CD8-positive, alpha-beta T cell (primary cell): ENCODE measurements at regions of chr2 and their contacts with region 1.

Region 1: DNA sequence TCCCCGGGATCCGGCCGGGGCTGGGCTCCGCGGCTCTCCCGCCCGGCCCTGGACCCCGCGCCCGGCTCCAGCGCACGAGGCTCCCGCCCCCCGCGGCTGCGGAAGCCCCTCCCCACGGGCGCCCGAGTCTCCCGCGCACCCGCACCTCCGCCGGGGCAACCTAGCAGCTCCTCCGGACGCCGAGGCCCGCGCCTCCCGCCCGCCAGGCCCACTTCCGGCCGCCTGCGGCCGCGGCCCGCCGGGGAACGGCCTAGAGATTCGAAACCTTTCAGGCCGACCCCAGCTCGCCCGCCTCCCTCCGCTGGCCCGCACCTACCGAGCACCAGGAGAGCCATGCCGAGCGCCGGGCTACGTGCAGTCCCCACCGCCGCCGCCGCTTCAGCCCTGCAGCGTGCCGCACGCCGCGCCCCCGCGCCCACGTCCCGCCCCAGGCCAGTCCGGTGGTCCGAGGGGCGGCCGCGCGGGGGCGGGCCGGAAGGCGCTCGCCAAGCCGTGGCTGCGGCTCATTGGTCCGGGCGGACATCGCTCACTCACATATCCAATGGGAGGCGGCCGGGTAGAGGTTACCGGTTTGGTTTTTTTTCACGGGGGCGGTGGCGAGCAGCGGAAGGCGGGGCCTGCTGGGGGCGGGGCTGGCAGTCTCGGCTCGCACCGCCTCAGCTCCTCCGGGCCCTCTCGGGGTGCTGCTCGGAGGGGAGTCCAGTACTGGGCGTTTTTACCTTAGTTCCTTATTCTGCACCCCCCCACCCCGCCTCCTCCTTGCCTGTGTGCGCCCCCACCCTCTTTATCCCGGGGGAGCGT is at the start of gene PDIA6:
- DNase-seq: peak; percentile 89 to 96 (median 93)
- ATAC-seq: peak; percentile 90
- H3K4me3 ChIP-seq: peak within 1 kb of the TSS; percentile 65 to 84
- H3K4me3 Mint-ChIP-seq: peak within 1 kb of the TSS; percentile 91
- H3K27ac ChIP-seq: peak within 1 kb of the TSS; percentile 56 to 73
- H3K27ac Mint-ChIP-seq: peak within 1 kb of the TSS; percentile 86
- H3K4me1 ChIP-seq: peaks cover 27% of the 10 kb centered on the region
- H3K4me1 Mint-ChIP-seq: peaks cover 41% of the 10 kb centered on the region
- H3K27me3 ChIP-seq: no peaks in the 10 kb centered on the region
- H3K27me3 Mint-ChIP-seq: peaks cover 1% of the 10 kb centered on the region
- CTCF ChIP-seq: no peak
- total RNA-seq, gene PDIA6: 24.4 to 24.8 TPM

Region 2: GRCh38 chr2:9555297-9556141 is 1257.0 kb before region 1 on chr2 and contains the start of gene ADAM17:
- CTCF ChIA-PET with region 1: no interaction called
- POLR2A ChIA-PET with region 1: no interaction called
- intact Hi-C with region 1: loop called in 1 of 2 experiments (anchors 5 kb)
- DNase-seq: peak; percentile 62 to 93 (median 81)
- ATAC-seq: peak; percentile 88
- H3K4me3 ChIP-seq: peak within 1 kb of the TSS; percentile 91 to 96
- H3K4me3 Mint-ChIP-seq: peak within 1 kb of the TSS; percentile 94
- H3K27ac ChIP-seq: peak within 1 kb of the TSS; percentile 93 to 94
- H3K27ac Mint-ChIP-seq: peak within 1 kb of the TSS; percentile 93
- H3K4me1 ChIP-seq: peaks cover 37% of the 10 kb centered on the region
- H3K4me1 Mint-ChIP-seq: peaks cover 49% of the 10 kb centered on the region
- H3K27me3 ChIP-seq: no peaks in the 10 kb centered on the region
- H3K27me3 Mint-ChIP-seq: no peaks in the 10 kb centered on the region
- CTCF ChIP-seq: no peak
- total RNA-seq, gene ADAM17: 20.0 to 25.1 TPM

Region 3: GRCh38 chr2:9951272-9951972 is 861.1 kb before region 1 on chr2 and contains the start of gene GRHL1:
- CTCF ChIA-PET with region 1: no interaction called
- POLR2A ChIA-PET with region 1: no interaction called
- intact Hi-C with region 1: loop called in 1 of 2 experiments (anchors 10 kb)
- DNase-seq: peak; percentile 77 to 96 (median 89)
- ATAC-seq: peak; percentile 94
- H3K4me3 ChIP-seq: peak within 1 kb of the TSS; percentile 52 to 58
- H3K4me3 Mint-ChIP-seq: peak within 1 kb of the TSS; percentile 84
- H3K27ac ChIP-seq: no peak within 1 kb of the TSS
- H3K27ac Mint-ChIP-seq: peak within 1 kb of the TSS; percentile 41
- H3K4me1 ChIP-seq: peaks cover 11% of the 10 kb centered on the region
- H3K4me1 Mint-ChIP-seq: peaks cover 6% of the 10 kb centered on the region
- H3K27me3 ChIP-seq: peaks cover 8% of the 10 kb centered on the region in 2 experiments
- H3K27me3 Mint-ChIP-seq: peaks cover 42% of the 10 kb centered on the region
- CTCF ChIP-seq: no peak
- total RNA-seq, gene GRHL1: 0.76 to 0.86 TPM

Region 4: GRCh38 chr2:11124503-11125068 is 312.0 kb after region 1 on chr2:
- CTCF ChIA-PET with region 1: interaction called, 7 read pairs
- POLR2A ChIA-PET with region 1: interaction called, 3 read pairs
- intact Hi-C with region 1: loop called in 1 of 2 experiments (anchors 5 kb)
- DNase-seq: peak in 8 of 9 experiments; percentile 22 to 66 (median 42)
- ATAC-seq: peak; percentile 74
- H3K4me3 ChIP-seq: no peak overlapping the region
- H3K4me3 Mint-ChIP-seq: no peak overlapping the region
- H3K27ac ChIP-seq: no peak overlapping the region
- H3K27ac Mint-ChIP-seq: no peak overlapping the region
- H3K4me1 ChIP-seq: no peaks in the 10 kb centered on the region
- H3K4me1 Mint-ChIP-seq: peaks cover 17% of the 10 kb centered on the region
- H3K27me3 ChIP-seq: no peaks in the 10 kb centered on the region
- H3K27me3 Mint-ChIP-seq: no peaks in the 10 kb centered on the region
- CTCF ChIP-seq: peak; percentile 35

Region 5: GRCh38 chr2:11344342-11344955 is 531.9 kb after region 1 on chr2 and contains the start of gene ROCK2:
- CTCF ChIA-PET with region 1: no interaction called
- POLR2A ChIA-PET with region 1: no interaction called
- intact Hi-C with region 1: loop called in 1 of 2 experiments (anchors 10 kb)
- DNase-seq: peak; percentile 28 to 81 (median 62)
- ATAC-seq: peak; percentile 61
- H3K4me3 ChIP-seq: peak within 1 kb of the TSS; percentile 79 to 85
- H3K4me3 Mint-ChIP-seq: peak within 1 kb of the TSS; percentile 95
- H3K27ac ChIP-seq: peak within 1 kb of the TSS; percentile 37 to 43
- H3K27ac Mint-ChIP-seq: peak within 1 kb of the TSS; percentile 90
- H3K4me1 ChIP-seq: peaks cover 12% of the 10 kb centered on the region
- H3K4me1 Mint-ChIP-seq: peaks cover 42% of the 10 kb centered on the region
- H3K27me3 ChIP-seq: no peaks in the 10 kb centered on the region
- H3K27me3 Mint-ChIP-seq: no peaks in the 10 kb centered on the region
- CTCF ChIP-seq: no peak
- total RNA-seq, gene ROCK2: 4.1 to 5.7 TPM

Region 6: GRCh38 chr2:11743846-11744553 is 931.4 kb after region 1 on chr2:
- CTCF ChIA-PET with region 1: no interaction called
- POLR2A ChIA-PET with region 1: no interaction called
- intact Hi-C with region 1: loop called in 1 of 2 experiments (anchors 10 kb)
- DNase-seq: peak in 8 of 9 experiments; percentile 48 to 86 (median 68)
- ATAC-seq: peak; percentile 25
- H3K4me3 ChIP-seq: peak overlapping the region in 1 of 2 experiments; percentile 9
- H3K4me3 Mint-ChIP-seq: peak overlapping the region; percentile 54
- H3K27ac ChIP-seq: peak overlapping the region in 1 of 2 experiments; percentile 20
- H3K27ac Mint-ChIP-seq: peak overlapping the region; percentile 56
- H3K4me1 ChIP-seq: peaks cover 41% of the 10 kb centered on the region
- H3K4me1 Mint-ChIP-seq: peaks cover 46% of the 10 kb centered on the region
- H3K27me3 ChIP-seq: no peaks in the 10 kb centered on the region
- H3K27me3 Mint-ChIP-seq: no peaks in the 10 kb centered on the region
- CTCF ChIP-seq: no peak